ENCODE measurements at regions of chr2 and their contacts with region 1.

Region 1: GRCh38 chr2:57796527-57796926 is 250.1 kb upstream of the VRK2 start:
- DNase-seq: no peak
- ATAC-seq: no peak
- H3K4me3 ChIP-seq: no peak overlapping the region
- H3K27ac ChIP-seq: no peak overlapping the region
- H3K4me1 ChIP-seq: no peaks in the 10 kb centered on the region
- H3K27me3 ChIP-seq: no peaks in the 10 kb centered on the region
- CTCF ChIP-seq: no peak

Region 2: GRCh38 chr2:57753636-57754035 is 42.9 kb before region 1 on chr2:
- intact Hi-C with region 1: loop called in 1 of 10 experiments (anchors 2 kb)
- DNase-seq: no peak
- ATAC-seq: no peak
- H3K4me3 ChIP-seq: no peak overlapping the region
- H3K27ac ChIP-seq: no peak overlapping the region
- H3K4me1 ChIP-seq: no peaks in the 10 kb centered on the region
- H3K27me3 ChIP-seq: no peaks in the 10 kb centered on the region
- CTCF ChIP-seq: no peak